MCF 10A (cell line): ENCODE measurements at regions of chr5 and their contacts with region 1.

Region 1: DNA sequence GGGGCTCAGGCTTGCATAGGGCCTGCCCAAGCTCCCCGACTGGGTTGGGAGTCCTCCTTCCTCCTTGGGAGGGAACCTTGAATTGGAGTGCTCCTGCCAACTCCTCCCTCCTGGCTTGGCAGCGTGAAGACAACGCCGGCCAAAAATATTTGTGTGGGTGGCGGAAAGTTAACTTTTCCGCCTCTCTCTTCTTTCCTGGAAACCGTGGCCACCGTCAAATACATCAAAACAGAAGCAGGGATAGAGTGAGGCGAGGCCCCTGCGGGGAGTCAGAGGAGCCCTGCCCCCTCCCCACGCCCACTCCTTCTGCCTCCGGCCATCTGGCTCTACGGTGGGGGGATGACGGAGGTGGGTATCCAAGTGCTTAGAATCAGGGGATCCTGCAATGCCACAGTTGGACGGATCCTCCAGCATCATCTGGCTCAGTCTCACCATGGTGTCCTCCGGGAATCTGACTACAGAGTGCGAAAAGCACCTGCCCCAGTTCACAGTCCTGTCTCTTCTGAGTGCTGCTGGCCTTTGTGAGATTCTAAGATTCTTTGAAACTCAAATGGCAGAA is 25.2 kb upstream of the SYNPO start:
- DNase-seq: peak; percentile 88
- H3K4me3 Mint-ChIP-seq: no peak overlapping the region
- H3K27ac Mint-ChIP-seq: no peak overlapping the region
- H3K4me1 Mint-ChIP-seq: peaks cover 33% of the 10 kb centered on the region
- H3K27me3 Mint-ChIP-seq: no peaks in the 10 kb centered on the region
- CTCF ChIP-seq: no peak

Region 2: GRCh38 chr5:150567021-150567717 is 48.1 kb before region 1 on chr5:
- CTCF ChIA-PET with region 1: interaction called, 3 read pairs
- POLR2A ChIA-PET with region 1: no interaction called
- intact Hi-C with region 1: loop called (anchors 2 kb)
- DNase-seq: peak; percentile 74
- H3K4me3 Mint-ChIP-seq: no peak overlapping the region
- H3K27ac Mint-ChIP-seq: no peak overlapping the region
- H3K4me1 Mint-ChIP-seq: peaks cover 11% of the 10 kb centered on the region
- H3K27me3 Mint-ChIP-seq: no peaks in the 10 kb centered on the region
- CTCF ChIP-seq: no peak

Region 3: DNA sequence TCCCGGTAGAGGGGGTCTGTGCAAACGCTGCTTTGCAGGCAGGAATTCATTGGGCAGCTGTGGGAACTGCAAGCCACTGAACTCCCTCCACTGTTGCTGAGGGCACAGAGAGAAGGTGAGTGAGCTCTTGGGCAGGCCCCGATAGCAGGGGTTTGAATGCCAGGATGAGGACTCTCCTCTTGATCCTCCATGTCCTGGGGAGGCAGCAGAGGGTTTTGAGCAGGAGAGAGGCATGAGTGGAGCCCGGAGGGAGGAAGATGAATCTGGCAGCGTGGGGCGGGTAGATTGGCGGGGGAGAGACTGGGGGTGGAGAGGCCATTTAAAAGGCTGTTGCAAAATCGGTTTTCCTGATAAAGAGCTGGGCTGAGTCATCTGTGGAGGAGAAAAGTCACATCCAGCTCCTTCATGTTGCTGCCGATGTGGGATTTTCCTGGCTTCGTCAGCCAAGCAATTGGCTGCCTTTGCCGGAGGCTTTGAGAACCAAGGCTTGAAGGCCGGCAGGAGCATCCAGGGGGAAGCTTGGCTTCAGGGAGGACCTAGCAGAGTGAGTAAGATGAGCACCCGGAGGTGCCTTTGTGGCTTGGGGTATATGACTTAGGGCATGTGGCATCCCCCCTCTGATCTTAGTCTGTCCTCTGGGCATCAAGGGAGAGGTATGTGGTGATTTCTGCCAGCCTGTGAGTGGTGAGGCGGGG is 25.2 kb after region 1 on chr5 and contains the start of gene SYNPO:
- CTCF ChIA-PET with region 1: interaction called, 5 read pairs
- POLR2A ChIA-PET with region 1: interaction called, 9 read pairs
- intact Hi-C with region 1: loop called (anchors 1 kb)
- DNase-seq: peak; percentile 99
- H3K4me3 Mint-ChIP-seq: peak within 1 kb of the TSS; percentile 68
- H3K27ac Mint-ChIP-seq: peak within 1 kb of the TSS; percentile 86
- H3K4me1 Mint-ChIP-seq: peaks cover 94% of the 10 kb centered on the region
- H3K27me3 Mint-ChIP-seq: no peaks in the 10 kb centered on the region
- CTCF ChIP-seq: no peak
- total RNA-seq, gene SYNPO: 6.3 and 7.1 TPM in 2 replicates

Region 4: DNA sequence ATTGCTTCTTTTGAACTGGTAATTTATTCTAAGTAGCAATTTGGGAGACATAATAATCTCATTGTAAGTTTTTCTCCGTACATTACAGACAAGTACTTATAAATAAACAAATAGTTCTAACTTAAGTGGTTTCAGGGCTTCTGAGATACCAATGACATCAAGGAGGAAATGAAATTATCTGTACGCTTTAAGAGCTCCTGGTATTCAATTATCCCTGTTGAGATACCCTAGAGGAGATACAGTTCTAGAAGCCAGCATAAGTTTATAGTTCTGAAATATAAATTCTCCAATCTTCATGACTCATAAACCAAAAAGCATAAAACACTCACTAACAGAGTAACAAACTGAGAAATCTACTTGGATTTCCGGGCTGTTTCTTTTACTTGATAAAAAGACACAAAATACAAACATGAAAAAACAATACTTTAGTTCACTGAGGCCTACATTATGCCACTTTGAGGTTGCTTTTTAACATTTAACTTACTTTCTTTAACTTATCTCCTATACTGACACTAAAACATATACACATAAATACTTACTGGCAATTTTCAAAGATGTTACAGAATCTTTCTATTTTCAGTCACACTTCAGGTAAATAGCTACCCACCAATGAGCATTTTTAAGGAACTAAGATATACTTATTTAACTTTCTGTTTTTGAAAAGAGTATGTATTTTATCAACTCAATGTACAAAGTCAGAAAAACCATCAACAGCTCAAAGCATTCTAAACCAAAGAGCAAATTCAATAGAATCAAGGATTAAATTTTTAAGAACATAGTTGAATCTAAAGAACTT is 136.1 kb after region 1 on chr5:
- CTCF ChIA-PET with region 1: no interaction called
- POLR2A ChIA-PET with region 1: no interaction called
- intact Hi-C with region 1: no loop called
- DNase-seq: no peak
- H3K4me3 Mint-ChIP-seq: no peak overlapping the region
- H3K27ac Mint-ChIP-seq: peak overlapping the region; percentile 16
- H3K4me1 Mint-ChIP-seq: peaks cover 8% of the 10 kb centered on the region
- H3K27me3 Mint-ChIP-seq: no peaks in the 10 kb centered on the region
- CTCF ChIP-seq: no peak